ENCODE measurements at regions of chr1 and their contacts with region 1.

Region 1: GRCh38 chr1:158434741-158435140 is 8.7 kb upstream of the OR10K2 start:
- DNase-seq: no peak
- ATAC-seq: no peak
- H3K4me3 ChIP-seq: no peak overlapping the region
- H3K27ac ChIP-seq: no peak overlapping the region
- H3K4me1 ChIP-seq: no peaks in the 10 kb centered on the region
- H3K27me3 ChIP-seq: no peaks in the 10 kb centered on the region
- CTCF ChIP-seq: no peak
- POLR2A ChIP-seq: no peak
- RAD21 ChIP-seq: no peak

Region 2: DNA sequence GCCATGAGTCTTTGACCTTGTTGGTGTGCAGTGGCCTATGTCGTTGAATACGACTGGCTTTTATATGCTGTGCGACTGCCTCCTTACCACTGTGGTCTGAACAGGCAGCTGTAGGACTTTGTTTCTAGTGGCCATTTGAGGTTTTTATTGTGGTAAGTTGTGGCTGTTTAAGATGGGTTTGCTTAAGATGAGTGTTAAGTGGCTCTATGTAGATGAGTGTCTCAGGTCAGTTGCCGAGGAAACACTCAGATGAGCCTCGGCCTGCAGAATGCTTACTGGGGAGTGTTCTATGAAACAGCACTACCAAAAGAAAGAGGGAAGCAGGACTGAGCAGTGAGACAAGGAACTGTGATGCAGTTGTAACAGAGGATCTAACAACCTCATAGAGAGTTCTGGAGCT is 159.9 kb before region 1 on chr1:
- CTCF ChIA-PET with region 1: no interaction called
- POLR2A ChIA-PET with region 1: no interaction called
- RAD21 ChIA-PET with region 1: no interaction called
- intact Hi-C with region 1: no loop called
- DNase-seq: no peak
- ATAC-seq: no peak
- H3K4me3 ChIP-seq: no peak overlapping the region
- H3K27ac ChIP-seq: no peak overlapping the region
- H3K4me1 ChIP-seq: no peaks in the 10 kb centered on the region
- H3K27me3 ChIP-seq: peaks cover 4% of the 10 kb centered on the region; the same call in 1 of the 2 replicates
- CTCF ChIP-seq: no peak
- POLR2A ChIP-seq: no peak
- RAD21 ChIP-seq: no peak

Region 3: GRCh38 chr1:158445376-158445775 is 10.6 kb after region 1 on chr1:
- CTCF ChIA-PET with region 1: no interaction called
- POLR2A ChIA-PET with region 1: no interaction called
- RAD21 ChIA-PET with region 1: no interaction called
- intact Hi-C with region 1: loop called (anchors 1 kb)
- DNase-seq: no peak
- ATAC-seq: no peak
- H3K4me3 ChIP-seq: no peak overlapping the region
- H3K27ac ChIP-seq: no peak overlapping the region
- H3K4me1 ChIP-seq: no peaks in the 10 kb centered on the region
- H3K27me3 ChIP-seq: no peaks in the 10 kb centered on the region
- CTCF ChIP-seq: no peak
- POLR2A ChIP-seq: no peak
- RAD21 ChIP-seq: no peak

Measured in HCT116 (cell line).